T-cell (primary cell): ENCODE measurements at regions of chr15 and their contacts with region 1.

Region 1: DNA sequence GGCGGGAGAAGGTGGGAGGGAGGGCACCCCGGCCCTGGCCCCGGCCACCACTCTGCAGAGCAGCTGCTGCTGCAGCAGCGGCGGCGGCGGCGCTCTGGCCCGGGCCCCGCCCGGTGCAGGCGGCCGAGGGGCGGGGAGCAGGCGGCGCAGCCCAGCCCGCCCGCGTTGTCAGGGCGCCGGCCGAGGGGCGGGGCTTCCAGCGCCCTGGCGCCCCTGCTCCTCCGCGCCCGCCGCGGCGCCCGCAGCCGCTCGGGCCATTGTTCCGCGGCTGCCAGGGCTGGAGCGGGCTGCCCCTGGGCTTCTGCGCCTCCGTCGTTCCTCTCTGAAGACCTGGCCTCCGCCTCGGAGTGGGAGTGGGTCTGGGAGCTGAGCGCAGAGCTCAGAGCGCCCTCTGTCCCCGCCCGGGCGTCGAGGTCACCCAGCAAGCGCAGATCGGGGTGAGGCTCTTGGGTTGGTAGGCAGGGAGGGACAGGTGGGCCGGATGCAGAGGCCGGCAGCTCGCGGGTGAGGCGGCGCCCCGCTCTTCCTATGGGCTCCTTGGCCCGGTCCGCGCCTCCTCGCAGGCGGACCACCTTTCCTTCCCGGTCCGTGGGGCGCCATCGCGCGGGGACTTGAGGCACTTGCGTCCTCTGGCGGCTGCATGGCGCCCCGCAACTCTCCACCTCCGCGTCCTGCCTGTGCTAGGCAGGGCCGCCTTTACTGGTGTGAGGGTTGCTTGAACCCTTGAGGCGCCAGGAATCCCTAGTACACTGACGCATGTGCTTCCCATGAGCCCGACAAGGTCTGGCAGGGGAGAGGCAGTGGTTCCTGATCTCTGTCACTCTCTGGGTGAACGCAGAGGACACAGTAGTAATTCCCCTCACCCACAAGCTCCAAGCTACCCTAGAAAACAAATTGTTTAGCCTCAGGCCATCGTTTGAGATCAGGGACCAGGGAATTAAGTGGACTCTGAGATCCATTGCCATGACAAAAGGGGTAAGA is at the start of gene LPCAT4:
- DNase-seq: peak; percentile 77 to 94 (median 86)
- ATAC-seq: peak; percentile 87 to 92 (median 88)
- H3K4me3 ChIP-seq: peak within 1 kb of the TSS; percentile 87 to 92
- H3K4me3 Mint-ChIP-seq: peak within 1 kb of the TSS; percentile 95 to 97 (median 96)
- H3K27ac ChIP-seq: peak within 1 kb of the TSS; percentile 88
- H3K27ac Mint-ChIP-seq: peak within 1 kb of the TSS; percentile 96
- H3K4me1 ChIP-seq: peaks cover 10 to 37% of the 10 kb centered on the region in 2 experiments
- H3K4me1 Mint-ChIP-seq: peaks cover 34 to 46% (median 37%) of the 10 kb centered on the region in 3 donors
- H3K27me3 ChIP-seq: no peaks in the 10 kb centered on the region
- H3K27me3 Mint-ChIP-seq: no peaks in the 10 kb centered on the region
- total RNA-seq, gene LPCAT4: 60.8 to 115 (median 91.1) TPM

Region 2: DNA sequence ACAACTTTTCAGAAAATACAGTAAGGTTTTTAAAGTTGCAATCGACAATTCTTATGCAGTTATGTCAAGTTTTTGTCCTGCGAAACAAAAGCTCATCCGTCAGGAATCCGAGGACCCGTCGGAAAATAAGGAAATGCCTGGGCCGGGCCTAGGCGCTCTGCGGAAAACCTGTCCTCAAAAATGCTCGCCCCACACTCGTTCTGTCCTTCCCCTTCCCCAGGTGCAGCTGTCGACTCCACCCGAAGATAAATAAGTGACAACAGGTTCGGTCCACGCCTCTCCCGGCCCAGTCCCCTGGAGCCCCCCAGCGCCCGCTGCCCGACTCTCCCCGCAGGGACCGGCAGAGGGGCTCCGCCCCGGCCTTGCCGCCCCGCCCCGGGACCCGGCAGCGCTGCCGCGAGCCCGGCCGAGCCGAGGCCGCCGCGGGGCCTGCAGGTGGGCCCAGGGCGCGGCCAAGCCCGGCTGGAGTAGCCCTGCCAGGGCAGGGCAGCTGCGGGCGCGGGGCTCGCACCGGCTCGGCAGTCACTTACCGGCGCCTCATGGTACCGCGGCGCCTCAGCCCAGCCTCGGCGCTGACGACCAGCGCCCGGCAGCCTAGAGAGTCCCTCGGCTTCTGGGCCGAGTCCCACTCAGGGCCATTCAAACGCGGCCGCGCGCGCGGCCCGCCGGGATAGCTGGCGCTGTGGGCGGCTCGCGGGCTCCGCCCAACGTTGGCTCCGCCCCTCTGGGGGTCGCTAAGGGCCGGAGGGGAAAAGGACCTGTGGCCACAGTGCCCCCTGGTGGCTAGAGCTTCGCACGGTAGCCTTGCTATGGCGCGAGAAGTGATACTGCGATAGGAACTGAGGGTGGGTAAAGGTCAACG is 157.7 kb before region 1 on chr15 and contains the start of gene KATNBL1:
- CTCF ChIA-PET with region 1: interaction called in 1 of 2 experiments, 11 read pairs
- POLR2A ChIA-PET with region 1: no interaction called
- DNase-seq: peak; percentile 83 to 97 (median 93)
- ATAC-seq: peak; percentile 92 to 97 (median 95)
- H3K4me3 ChIP-seq: peak within 1 kb of the TSS; percentile 63 to 68
- H3K4me3 Mint-ChIP-seq: peak within 1 kb of the TSS; percentile 81 to 90 (median 88)
- H3K27ac ChIP-seq: peak within 1 kb of the TSS; percentile 25
- H3K27ac Mint-ChIP-seq: peak within 1 kb of the TSS; percentile 61 to 79
- H3K4me1 ChIP-seq: peaks cover 3 to 8% of the 10 kb centered on the region in 2 experiments
- H3K4me1 Mint-ChIP-seq: peaks cover 21 to 26% (median 22%) of the 10 kb centered on the region in 3 donors
- H3K27me3 ChIP-seq: no peaks in the 10 kb centered on the region
- H3K27me3 Mint-ChIP-seq: no peaks in the 10 kb centered on the region
- total RNA-seq, gene KATNBL1: 27.1 to 37.3 (median 29.5) TPM

Region 3: GRCh38 chr15:34241372-34242330 is 125.7 kb before region 1 on chr15:
- CTCF ChIA-PET with region 1: interaction called, 19 to 39 read pairs
- POLR2A ChIA-PET with region 1: no interaction called
- DNase-seq: peak in 23 of 35 experiments; percentile 7 to 73 (median 21)
- ATAC-seq: peak; percentile 74 to 88 (median 80)
- H3K4me3 ChIP-seq: no peak overlapping the region
- H3K4me3 Mint-ChIP-seq: no peak overlapping the region
- H3K27ac ChIP-seq: no peak overlapping the region
- H3K27ac Mint-ChIP-seq: peak overlapping the region in 1 of 2 donors; percentile 61
- H3K4me1 ChIP-seq: no peaks in the 10 kb centered on the region
- H3K4me1 Mint-ChIP-seq: peaks cover 0 to 11% (median 10%) of the 10 kb centered on the region in 3 donors
- H3K27me3 ChIP-seq: no peaks in the 10 kb centered on the region
- H3K27me3 Mint-ChIP-seq: no peaks in the 10 kb centered on the region

Region 4: GRCh38 chr15:34327906-34328305 is 39.5 kb before region 1 on chr15:
- CTCF ChIA-PET with region 1: interaction called, 3 to 19 read pairs
- POLR2A ChIA-PET with region 1: no interaction called
- DNase-seq: no peak
- ATAC-seq: peak in 1 of 4 experiments; percentile 27
- H3K4me3 ChIP-seq: peak overlapping the region in 1 of 2 donors; percentile 18
- H3K4me3 Mint-ChIP-seq: peak overlapping the region; percentile 32 to 61 (median 56)
- H3K27ac ChIP-seq: peak overlapping the region; percentile 53
- H3K27ac Mint-ChIP-seq: peak overlapping the region; percentile 87 to 96
- H3K4me1 ChIP-seq: peaks cover 32 to 37% of the 10 kb centered on the region in 2 experiments
- H3K4me1 Mint-ChIP-seq: peaks cover 65 to 75% (median 69%) of the 10 kb centered on the region in 3 donors
- H3K27me3 ChIP-seq: no peaks in the 10 kb centered on the region
- H3K27me3 Mint-ChIP-seq: no peaks in the 10 kb centered on the region

Region 5: GRCh38 chr15:34337557-34338306 is 29.7 kb before region 1 on chr15 and contains the start of gene SLC12A6:
- CTCF ChIA-PET with region 1: interaction called, 3 to 24 read pairs
- POLR2A ChIA-PET with region 1: interaction called, 4 to 5 read pairs
- DNase-seq: peak; percentile 81 to 95 (median 88)
- ATAC-seq: peak; percentile 85 to 91 (median 88)
- H3K4me3 ChIP-seq: peak within 1 kb of the TSS; percentile 74 to 99
- H3K4me3 Mint-ChIP-seq: peak within 1 kb of the TSS; percentile 97 to 100 (median 97)
- H3K27ac ChIP-seq: peak within 1 kb of the TSS; percentile 82
- H3K27ac Mint-ChIP-seq: peak within 1 kb of the TSS; percentile 96 to 100
- H3K4me1 ChIP-seq: peaks cover 38 to 50% of the 10 kb centered on the region in 2 experiments
- H3K4me1 Mint-ChIP-seq: peaks cover 56 to 70% (median 63%) of the 10 kb centered on the region in 3 donors
- H3K27me3 ChIP-seq: no peaks in the 10 kb centered on the region
- H3K27me3 Mint-ChIP-seq: no peaks in the 10 kb centered on the region
- total RNA-seq, gene SLC12A6: 71.2 to 103 (median 77.8) TPM

Region 6: DNA sequence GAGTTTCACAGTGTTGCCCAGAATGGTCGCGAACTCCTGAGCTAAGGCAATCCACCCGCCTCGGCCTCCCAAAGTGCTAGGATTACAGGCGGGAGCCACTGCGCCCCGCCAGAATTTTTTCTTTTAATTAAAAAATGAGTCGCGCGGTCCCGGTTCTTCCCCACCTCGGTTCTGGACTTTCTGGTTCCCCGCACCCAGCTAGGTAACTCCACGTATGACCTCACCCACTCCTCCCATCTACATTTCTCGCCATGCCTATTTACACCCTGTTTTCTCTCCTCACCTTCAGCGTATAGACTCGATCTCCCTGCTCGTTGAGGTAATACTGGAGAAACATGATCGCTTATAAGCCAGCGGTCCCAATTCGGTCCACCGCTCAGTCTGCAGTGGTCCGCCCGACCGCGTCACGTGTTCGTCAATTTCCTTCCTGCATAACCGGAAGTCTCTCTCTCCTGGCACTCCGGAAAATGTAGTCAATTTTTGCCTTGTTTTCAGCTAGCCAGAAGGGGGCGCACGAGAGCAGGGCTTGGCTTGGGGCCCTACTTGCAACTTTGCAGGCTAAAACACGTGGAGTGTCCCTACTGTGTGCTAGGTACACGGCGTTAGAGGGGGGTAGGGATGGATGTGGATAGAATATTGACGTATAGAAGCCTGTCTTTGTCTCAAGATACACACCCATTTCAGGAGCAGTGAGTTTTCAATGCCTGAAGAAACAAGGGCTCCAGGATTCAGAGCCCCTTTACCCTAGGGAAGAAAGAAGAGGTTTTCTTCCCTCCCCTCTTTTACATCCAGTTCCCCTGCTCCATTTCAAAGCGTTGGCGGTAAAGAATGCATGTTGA is 24.4 kb before region 1 on chr15 and contains the starts of genes NOP10 and NUTM1:
- CTCF ChIA-PET with region 1: interaction called, 3 to 24 read pairs
- POLR2A ChIA-PET with region 1: interaction called, 4 to 5 read pairs
- DNase-seq: peak; percentile 78 to 96 (median 88)
- ATAC-seq: peak; percentile 85 to 89 (median 86)
- H3K4me3 ChIP-seq: peak within 1 kb of the TSS; percentile 69 to 92
- H3K4me3 Mint-ChIP-seq: no peak within 1 kb of the TSS
- H3K27ac ChIP-seq: peak within 1 kb of the TSS; percentile 64
- H3K27ac Mint-ChIP-seq: peak within 1 kb of the TSS; percentile 68 to 76
- H3K4me1 ChIP-seq: peaks cover 14 to 27% of the 10 kb centered on the region in 2 experiments
- H3K4me1 Mint-ChIP-seq: peaks cover 11 to 29% (median 28%) of the 10 kb centered on the region in 3 donors
- H3K27me3 ChIP-seq: no peaks in the 10 kb centered on the region
- H3K27me3 Mint-ChIP-seq: no peaks in the 10 kb centered on the region
- total RNA-seq, gene NOP10: 38.2 to 88.9 (median 68.8) TPM
- total RNA-seq, gene NUTM1: not detected

Region 7: GRCh38 chr15:34490417-34491193 is 123.2 kb after region 1 on chr15:
- CTCF ChIA-PET with region 1: no interaction called
- POLR2A ChIA-PET with region 1: no interaction called
- DNase-seq: no peak
- ATAC-seq: no peak
- H3K4me3 ChIP-seq: no peak overlapping the region
- H3K4me3 Mint-ChIP-seq: peak overlapping the region in 1 of 3 donors; percentile 18
- H3K27ac ChIP-seq: no peak overlapping the region
- H3K27ac Mint-ChIP-seq: no peak overlapping the region
- H3K4me1 ChIP-seq: no peaks in the 10 kb centered on the region
- H3K4me1 Mint-ChIP-seq: peaks cover 5 to 10% (median 9%) of the 10 kb centered on the region in 3 donors
- H3K27me3 ChIP-seq: peaks cover 8 to 39% of the 10 kb centered on the region in 2 experiments
- H3K27me3 Mint-ChIP-seq: peaks cover 60 to 73% of the 10 kb centered on the region in 2 donors